PC-3 (cell line): ENCODE measurements at regions of chr11 and their contacts with region 1.

Region 1: GRCh38 chr11:19561011-19561410 is 151.6 kb upstream of the NAV2 start:
- DNase-seq: peak; percentile 31
- ATAC-seq: peak; percentile 55
- H3K4me3 ChIP-seq: no peak overlapping the region
- H3K27ac ChIP-seq: no peak overlapping the region
- H3K4me1 ChIP-seq: peaks cover 10% of the 10 kb centered on the region; the same call in 1 of the 2 replicates
- H3K27me3 ChIP-seq: no peaks in the 10 kb centered on the region
- CTCF ChIP-seq: no peak

Region 2: DNA sequence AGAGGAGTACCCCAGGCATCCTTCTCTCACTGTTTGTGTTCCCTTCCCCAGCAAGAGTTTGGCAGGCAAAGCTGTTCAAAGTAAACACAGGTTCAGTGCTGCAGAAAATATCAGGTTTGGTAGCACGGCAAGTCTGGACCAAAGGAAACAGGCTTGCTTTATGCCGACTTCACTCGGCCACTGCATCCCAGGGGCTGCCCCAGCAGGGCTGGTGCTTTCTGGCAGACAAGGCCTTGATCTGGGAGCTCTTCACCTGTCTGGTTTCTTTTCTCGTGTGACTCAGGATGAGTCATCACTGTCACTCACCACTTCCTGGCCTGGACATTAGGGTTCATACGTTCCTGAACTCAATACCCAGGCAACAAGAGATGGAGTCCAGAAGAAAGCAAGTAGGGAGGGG is 99.1 kb after region 1 on chr11:
- CTCF ChIA-PET with region 1: interaction called, 3 read pairs
- POLR2A ChIA-PET with region 1: no interaction called
- intact Hi-C with region 1: loop called (anchors 2 kb)
- DNase-seq: peak; percentile 97
- ATAC-seq: peak; percentile 97
- H3K4me3 ChIP-seq: no peak overlapping the region
- H3K27ac ChIP-seq: peak overlapping the region; percentile 51
- H3K4me1 ChIP-seq: peaks cover 25% of the 10 kb centered on the region
- H3K27me3 ChIP-seq: no peaks in the 10 kb centered on the region
- CTCF ChIP-seq: no peak

Region 3: GRCh38 chr11:19679952-19680828 is 119.2 kb after region 1 on chr11:
- CTCF ChIA-PET with region 1: no interaction called
- POLR2A ChIA-PET with region 1: no interaction called
- intact Hi-C with region 1: loop called (anchors 1 kb)
- DNase-seq: peak; percentile 97
- ATAC-seq: peak; percentile 93
- H3K4me3 ChIP-seq: peak overlapping the region; percentile 20; the same call in 1 of the 2 replicates
- H3K27ac ChIP-seq: peak overlapping the region; percentile 66
- H3K4me1 ChIP-seq: peaks cover 29% of the 10 kb centered on the region
- H3K27me3 ChIP-seq: no peaks in the 10 kb centered on the region
- CTCF ChIP-seq: no peak

Region 4: DNA sequence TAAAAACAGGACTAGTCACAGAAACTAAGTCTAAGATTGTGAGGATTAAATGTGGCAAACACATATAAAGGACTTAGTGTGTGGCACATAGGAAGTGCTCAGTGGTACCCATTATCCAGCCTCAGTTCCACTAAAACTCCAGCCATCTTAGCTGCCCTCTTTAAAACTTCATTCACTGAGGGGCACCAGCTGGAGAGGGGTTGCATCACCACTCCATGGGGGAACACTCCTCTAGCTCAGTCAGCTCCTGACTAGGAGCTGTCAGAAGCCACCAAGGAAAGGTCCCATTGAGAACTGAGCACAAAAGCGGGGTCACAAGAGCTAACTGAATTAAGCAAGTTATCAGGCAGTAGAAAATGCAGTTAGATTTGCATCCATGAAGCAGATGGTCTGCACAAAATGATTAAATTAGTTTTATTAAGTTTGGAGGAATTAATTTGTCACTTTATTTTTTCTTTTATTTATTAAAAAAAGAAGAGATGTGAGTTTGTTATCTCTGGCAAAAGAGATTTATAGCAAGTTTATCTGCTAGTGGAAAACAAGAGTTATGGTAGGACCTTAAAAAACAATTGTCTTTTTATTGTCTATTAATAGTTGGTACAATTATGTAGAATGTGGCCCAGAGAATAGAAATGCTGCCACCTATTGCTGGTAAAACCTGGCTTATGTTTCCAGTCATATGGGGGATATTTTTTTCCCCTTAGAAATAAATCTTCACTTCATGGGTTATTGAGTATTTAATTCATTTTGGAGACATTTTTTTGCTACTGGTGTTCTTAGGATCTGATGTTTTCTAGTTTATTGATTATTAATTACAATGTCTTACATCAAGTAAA is 247.3 kb after region 1 on chr11:
- CTCF ChIA-PET with region 1: no interaction called
- POLR2A ChIA-PET with region 1: no interaction called
- intact Hi-C with region 1: loop called (anchors 1 kb)
- DNase-seq: peak; percentile 21
- ATAC-seq: no peak
- H3K4me3 ChIP-seq: no peak overlapping the region
- H3K27ac ChIP-seq: no peak overlapping the region
- H3K4me1 ChIP-seq: peaks cover 30% of the 10 kb centered on the region
- H3K27me3 ChIP-seq: no peaks in the 10 kb centered on the region
- CTCF ChIP-seq: peak; percentile 56

Region 5: GRCh38 chr11:19903620-19904069 is 342.6 kb after region 1 on chr11:
- CTCF ChIA-PET with region 1: interaction called, 16 read pairs
- POLR2A ChIA-PET with region 1: no interaction called
- intact Hi-C with region 1: loop called (anchors 1 kb)
- DNase-seq: peak; percentile 78
- ATAC-seq: peak; percentile 86
- H3K4me3 ChIP-seq: no peak overlapping the region
- H3K27ac ChIP-seq: no peak overlapping the region
- H3K4me1 ChIP-seq: no peaks in the 10 kb centered on the region
- H3K27me3 ChIP-seq: no peaks in the 10 kb centered on the region
- CTCF ChIP-seq: peak; percentile 84

Region 6: DNA sequence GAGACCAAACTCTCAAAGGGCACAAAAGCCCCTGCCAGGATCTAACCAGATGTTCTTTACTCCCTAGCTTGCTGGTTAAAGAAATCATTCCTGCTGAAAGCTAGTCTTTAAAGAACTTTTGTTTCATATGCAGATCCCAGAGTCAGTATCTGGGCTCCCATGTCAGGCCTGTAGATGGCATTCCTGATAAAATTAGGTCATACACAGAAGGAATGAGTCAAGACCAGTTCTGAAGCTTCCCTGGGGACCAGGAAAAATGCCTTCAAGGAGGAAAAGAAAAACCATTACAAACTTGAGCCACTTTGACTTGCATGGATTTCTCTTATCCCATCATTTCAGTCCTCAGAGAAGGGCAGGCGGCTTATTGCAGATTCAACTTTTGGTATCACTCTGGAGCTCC is 593.4 kb after region 1 on chr11:
- CTCF ChIA-PET with region 1: no interaction called
- POLR2A ChIA-PET with region 1: no interaction called
- intact Hi-C with region 1: no loop called
- DNase-seq: peak; percentile 13
- ATAC-seq: no peak; the same call in 1 of the 2 replicates
- H3K4me3 ChIP-seq: no peak overlapping the region
- H3K27ac ChIP-seq: no peak overlapping the region
- H3K4me1 ChIP-seq: no peaks in the 10 kb centered on the region
- H3K27me3 ChIP-seq: peaks cover 34% of the 10 kb centered on the region
- CTCF ChIP-seq: no peak